Heart right ventricle (tissue), 16 donors: ENCODE measurements at regions of chr7 and their contacts with region 1.

Region 1: DNA sequence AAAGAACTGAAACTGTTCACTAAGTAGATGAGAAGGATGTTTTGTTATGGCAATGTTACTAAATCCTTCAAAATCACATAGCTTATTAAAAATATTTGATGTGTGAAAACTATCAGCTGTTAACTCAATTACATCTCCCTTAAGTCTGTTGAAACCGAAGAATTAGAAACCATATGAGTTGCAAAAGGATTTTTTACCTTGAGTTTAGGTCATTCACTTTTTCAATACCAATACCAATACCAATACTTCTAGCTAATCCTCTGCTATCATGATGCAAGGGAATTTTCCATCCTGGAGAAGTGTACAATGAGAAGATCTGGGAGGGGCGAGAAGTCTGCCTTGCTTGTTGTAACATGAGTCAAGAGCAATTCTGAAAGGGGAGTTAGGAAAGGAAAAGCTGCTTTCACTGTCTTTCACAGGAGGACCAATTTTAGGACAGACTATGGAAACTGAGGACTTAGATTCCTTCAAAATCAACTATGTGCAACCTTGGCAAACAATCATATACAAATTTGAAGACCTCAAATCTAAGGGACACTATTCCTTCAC is 199.7 kb downstream of the IMMP2L start:
- DNase-seq: no peak
- ATAC-seq: no peak
- H3K4me3 ChIP-seq: no peak overlapping the region
- H3K27ac ChIP-seq: no peak overlapping the region
- H3K4me1 ChIP-seq: peaks cover 0 to 8% (median 0%) of the 10 kb centered on the region in 9 donors
- H3K27me3 ChIP-seq: no peaks in the 10 kb centered on the region
- CTCF ChIP-seq: no peak

Region 2: DNA sequence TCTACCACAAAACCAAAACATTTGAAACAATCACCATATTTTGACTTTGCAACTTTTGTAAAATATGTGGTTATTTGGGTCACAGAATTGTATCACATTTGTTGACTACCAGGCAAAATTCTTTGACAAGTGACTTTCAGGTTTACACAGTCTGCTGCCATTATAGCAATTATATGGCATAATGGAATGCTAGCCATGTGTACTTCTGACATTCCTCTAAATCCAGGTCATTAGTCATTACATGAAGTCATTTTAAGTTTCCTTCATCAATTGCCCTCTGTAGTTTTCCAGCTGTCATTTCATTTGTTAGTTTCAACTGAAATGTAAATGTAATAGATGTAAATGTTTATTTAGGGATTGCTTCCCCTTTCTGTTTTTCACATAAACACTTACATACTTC is 62.2 kb after region 1 on chr7:
- intact Hi-C with region 1: loop called in 1 of 10 experiments (anchors 1 kb)
- DNase-seq: no peak
- ATAC-seq: no peak
- H3K4me3 ChIP-seq: no peak overlapping the region
- H3K27ac ChIP-seq: no peak overlapping the region
- H3K4me1 ChIP-seq: no peaks in the 10 kb centered on the region
- H3K27me3 ChIP-seq: no peaks in the 10 kb centered on the region
- CTCF ChIP-seq: no peak